ENCODE measurements at regions of chr22 and their contacts with region 1.

Region 1: GRCh38 chr22:30444632-30445437 is 19.3 kb downstream of the MTFP1 start:
- DNase-seq: peak in 7 of 10 donors; percentile 14 to 62 (median 59)
- H3K4me3 ChIP-seq: no peak overlapping the region
- H3K27ac ChIP-seq: peak overlapping the region in 25 of 59 donors; percentile 1 to 76 (median 48)
- H3K27me3 ChIP-seq: no peaks in the 10 kb centered on the region
- CTCF ChIP-seq: peak; percentile 57 to 92 (median 81)

Region 2: DNA sequence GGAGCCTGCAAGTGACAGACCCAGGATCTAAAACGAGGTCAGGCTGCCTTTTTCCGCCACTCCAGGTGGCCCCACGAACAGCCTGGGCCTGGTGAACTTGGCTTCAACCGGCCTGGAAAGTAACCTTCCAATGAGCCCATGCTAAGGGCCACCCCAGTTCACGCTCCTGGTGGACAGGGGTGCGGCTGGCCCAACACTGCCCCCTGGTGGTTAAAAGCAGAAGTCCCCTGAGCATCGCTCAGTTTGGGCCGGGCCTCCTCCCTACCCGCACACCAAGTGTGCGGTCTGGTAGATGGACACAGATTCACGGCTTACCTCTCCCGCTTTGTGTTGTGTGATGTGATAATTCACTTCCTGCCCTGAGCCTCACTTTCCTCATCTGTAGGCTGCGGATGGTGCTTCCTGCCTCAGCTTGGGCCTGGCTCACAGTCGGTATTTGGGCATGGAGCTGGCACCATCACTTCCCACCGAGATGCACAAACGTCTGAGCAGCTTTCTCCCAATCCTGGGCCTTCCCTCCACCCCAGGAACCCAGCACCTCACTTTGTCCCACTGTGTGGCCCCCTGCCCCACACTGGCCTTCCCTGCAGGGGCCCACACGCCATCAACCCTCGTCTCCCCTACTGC is 40.6 kb after region 1 on chr22:
- intact Hi-C with region 1: loop called in 1 of 2 experiments (anchors 5 kb)
- DNase-seq: peak; percentile 41 to 80 (median 55)
- H3K4me3 ChIP-seq: no peak overlapping the region
- H3K27ac ChIP-seq: no peak overlapping the region
- H3K27me3 ChIP-seq: no peaks in the 10 kb centered on the region
- CTCF ChIP-seq: peak; percentile 90 to 100 (median 98)

Region 3: DNA sequence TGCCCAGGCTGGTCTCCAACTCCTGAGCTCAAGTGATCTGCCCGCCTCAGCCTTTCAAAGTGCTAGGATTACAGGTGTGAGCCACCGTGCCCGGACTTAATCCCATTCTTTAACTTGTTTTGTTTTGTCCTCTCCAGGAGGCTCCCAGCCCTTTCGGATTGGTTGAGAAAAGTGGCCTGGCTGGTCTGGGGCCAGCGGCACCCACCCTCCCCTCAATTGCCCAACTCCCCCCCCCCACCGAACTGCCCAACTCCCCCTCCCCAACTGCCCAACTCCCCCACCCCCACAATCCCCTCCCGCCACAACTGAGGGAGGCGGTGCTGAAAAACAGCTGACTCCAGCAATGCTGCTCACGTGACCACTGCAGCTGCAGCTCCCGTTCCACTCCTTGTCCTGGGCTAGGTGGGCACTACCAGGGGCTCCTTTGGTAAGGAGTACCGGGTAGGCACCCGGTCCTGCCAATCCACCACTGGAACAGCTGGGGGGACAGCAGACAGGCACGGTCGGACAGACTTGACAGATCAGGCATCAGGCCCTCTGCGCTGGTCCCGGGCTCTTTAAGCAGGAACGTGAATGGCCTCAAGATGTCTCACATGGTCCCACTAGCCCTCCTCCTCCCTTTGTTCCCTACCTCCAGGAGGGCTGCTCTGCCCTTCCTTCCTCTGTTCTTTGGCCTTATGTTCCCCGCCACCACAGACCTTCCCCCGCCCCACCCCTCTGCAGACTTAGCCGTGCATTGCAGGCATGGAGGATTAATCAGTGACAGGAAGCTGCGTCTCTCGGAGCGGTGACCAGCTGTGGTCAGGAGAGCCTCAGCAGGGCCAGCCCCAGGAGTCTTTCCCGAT is 161.8 kb after region 1 on chr22 and contains the start of gene TCN2:
- intact Hi-C with region 1: loop called in 1 of 2 experiments (anchors 10 kb)
- DNase-seq: peak; percentile 23 to 84 (median 82)
- H3K4me3 ChIP-seq: peak within 1 kb of the TSS; percentile 42 to 80 (median 67)
- H3K27ac ChIP-seq: peak within 1 kb of the TSS in 55 of 59 donors; percentile 15 to 91 (median 72)
- H3K27me3 ChIP-seq: no peaks in the 10 kb centered on the region
- CTCF ChIP-seq: peak in 8 of 56 donors; percentile 7 to 21 (median 16)
- total RNA-seq, gene TCN2: 6.7 to 36.0 (median 16.1) TPM

Measured in dorsolateral prefrontal cortex (tissue), 120 donors.